GM23248 (cell line): ENCODE measurements at regions of chrX and their contacts with region 1.

Region 1: DNA sequence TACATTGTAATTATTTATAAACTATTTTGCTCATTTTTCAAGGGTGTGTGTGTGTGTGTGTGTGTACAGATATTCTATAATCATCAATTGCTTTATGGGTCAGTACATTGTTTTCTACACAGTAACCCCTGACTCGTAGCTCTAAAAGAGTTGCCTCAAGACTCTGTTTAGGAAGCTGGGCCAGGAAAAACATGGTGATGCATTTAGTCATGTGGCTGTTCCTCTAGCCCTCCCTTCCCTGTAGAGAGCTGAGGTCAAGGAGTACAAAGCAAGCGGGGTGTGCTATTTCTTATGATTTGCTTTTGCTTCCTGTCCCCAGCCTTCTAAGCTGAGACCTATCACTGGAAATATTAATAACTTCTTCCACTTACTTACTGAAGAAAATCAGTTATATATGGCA is 34.8 kb upstream of the SPANXD start:
- DNase-seq: no peak
- H3K4me3 ChIP-seq: no peak overlapping the region
- H3K27ac ChIP-seq: no peak overlapping the region
- H3K4me1 ChIP-seq: no peaks in the 10 kb centered on the region
- H3K27me3 ChIP-seq: no peaks in the 10 kb centered on the region

Region 2: DNA sequence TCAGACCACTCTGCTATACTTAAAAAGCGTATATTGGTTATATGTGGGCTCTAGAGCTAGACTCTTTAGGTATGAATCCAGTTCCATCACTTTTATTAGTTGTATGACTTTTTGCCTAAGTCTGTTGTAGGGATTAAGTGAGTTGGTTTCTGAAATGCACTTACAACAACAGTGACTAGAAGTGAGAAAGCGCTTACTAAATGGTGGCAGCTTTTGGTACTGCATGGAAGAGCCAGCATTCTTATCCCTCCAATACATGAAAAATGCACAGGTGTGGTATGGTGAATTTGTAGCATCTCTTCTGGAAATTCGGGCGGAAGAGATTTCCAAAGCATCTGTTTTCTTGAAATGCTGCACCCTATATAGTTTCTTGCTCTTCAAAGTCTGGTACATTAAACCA is 265.9 kb before region 1 on chrX:
- in situ Hi-C with region 1: loop called (anchors 25 kb)
- DNase-seq: peak; percentile 2
- H3K4me3 ChIP-seq: no peak overlapping the region
- H3K27ac ChIP-seq: no peak overlapping the region
- H3K4me1 ChIP-seq: no peaks in the 10 kb centered on the region
- H3K27me3 ChIP-seq: no peaks in the 10 kb centered on the region

Region 3: DNA sequence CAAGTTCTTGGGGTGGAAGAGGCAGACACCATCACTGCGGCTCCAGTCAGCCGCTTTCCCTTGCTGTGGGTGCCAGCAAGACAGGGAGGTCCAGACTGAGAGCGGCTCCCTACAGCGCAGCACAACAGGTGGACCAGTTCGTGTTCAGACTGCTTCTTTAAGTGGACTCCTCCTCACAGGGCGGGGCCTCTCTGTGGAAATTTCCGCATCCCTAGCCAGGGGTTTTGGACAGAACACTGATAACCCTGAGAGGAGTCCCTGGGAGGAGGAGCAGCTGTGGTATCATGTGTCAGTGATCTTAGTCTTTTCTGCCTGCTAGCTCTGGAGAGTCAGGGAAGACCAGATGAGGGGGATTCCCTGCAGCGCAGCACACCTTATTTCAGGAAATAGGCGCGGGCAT is 423.2 kb after region 1 on chrX:
- in situ Hi-C with region 1: no loop called
- DNase-seq: no peak
- H3K4me3 ChIP-seq: no peak overlapping the region
- H3K27ac ChIP-seq: no peak overlapping the region
- H3K4me1 ChIP-seq: no peaks in the 10 kb centered on the region
- H3K27me3 ChIP-seq: no peaks in the 10 kb centered on the region